Prostate gland (tissue), 2 donors: ENCODE measurements at regions of chr21 and their contacts with region 1.

Region 1: GRCh38 chr21:45554477-45555175 is 12.4 kb upstream of the SLC19A1 start:
- DNase-seq: peak; percentile 73
- H3K4me3 ChIP-seq: peak overlapping the region; percentile 38 to 44
- H3K27ac ChIP-seq: peak overlapping the region; percentile 61 to 85
- H3K4me1 ChIP-seq: no peaks in the 10 kb centered on the region
- H3K27me3 ChIP-seq: no peaks in the 10 kb centered on the region
- CTCF ChIP-seq: peak; percentile 82 to 96 (median 92)
- POLR2A ChIP-seq: peak; percentile 22

Region 2: GRCh38 chr21:45393021-45393420 is 161.6 kb before region 1 on chr21:
- intact Hi-C with region 1: no loop called
- DNase-seq: no peak
- H3K4me3 ChIP-seq: no peak overlapping the region
- H3K27ac ChIP-seq: no peak overlapping the region
- H3K4me1 ChIP-seq: no peaks in the 10 kb centered on the region
- H3K27me3 ChIP-seq: no peaks in the 10 kb centered on the region
- CTCF ChIP-seq: no peak
- POLR2A ChIP-seq: no peak

Region 3: GRCh38 chr21:45598109-45598508 is 43.5 kb after region 1 on chr21:
- intact Hi-C with region 1: loop called (anchors 2 kb)
- DNase-seq: no peak
- H3K4me3 ChIP-seq: no peak overlapping the region
- H3K27ac ChIP-seq: no peak overlapping the region
- H3K4me1 ChIP-seq: no peaks in the 10 kb centered on the region
- H3K27me3 ChIP-seq: no peaks in the 10 kb centered on the region
- CTCF ChIP-seq: no peak
- POLR2A ChIP-seq: no peak

Region 4: DNA sequence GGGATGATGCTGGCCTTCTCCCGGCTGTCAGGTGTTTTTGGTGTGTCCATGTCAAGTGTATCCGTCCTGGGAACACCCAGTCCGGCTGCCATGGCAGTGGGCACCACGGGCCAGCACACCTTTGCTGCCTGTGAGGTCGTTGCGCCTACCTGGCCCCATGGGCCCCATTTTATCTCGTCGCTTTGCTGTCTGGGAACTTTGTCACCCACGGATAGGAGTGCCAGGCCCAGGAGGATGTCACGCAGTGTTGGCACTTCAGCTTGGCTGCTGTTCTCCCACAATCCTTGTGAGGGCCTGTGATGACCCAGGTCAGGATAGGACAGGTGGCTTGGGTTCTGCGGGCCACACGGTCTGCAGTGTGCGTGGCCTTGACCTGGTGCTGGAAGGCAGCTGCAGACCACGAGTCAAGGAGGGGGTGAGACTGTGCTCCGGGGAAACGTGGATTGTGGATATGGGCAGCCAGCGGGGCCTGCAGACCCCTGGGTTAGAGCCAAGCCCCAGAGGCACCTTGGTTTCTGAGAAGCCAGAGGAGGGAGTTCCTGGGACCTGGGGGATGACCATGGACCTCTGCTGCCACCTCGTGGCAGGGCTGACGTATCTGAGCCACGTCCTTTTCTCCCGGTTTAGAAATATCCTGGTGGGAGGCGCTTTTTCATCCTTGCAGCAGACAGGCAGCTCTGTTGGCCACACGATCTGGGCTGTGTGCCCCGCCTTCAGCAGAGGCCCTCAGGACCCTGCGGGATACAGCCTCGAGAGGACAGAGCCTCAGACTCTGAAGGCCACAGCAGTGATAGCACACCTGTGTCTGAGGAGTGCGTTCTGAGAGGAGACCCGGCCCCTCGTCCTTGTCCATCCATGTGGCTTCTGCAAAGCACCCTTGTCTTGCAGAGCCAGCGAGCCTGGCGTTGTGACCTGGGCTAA is 265.8 kb after region 1 on chr21:
- intact Hi-C with region 1: loop called (anchors 5 kb)
- DNase-seq: peak; percentile 70
- H3K4me3 ChIP-seq: no peak overlapping the region
- H3K27ac ChIP-seq: no peak overlapping the region
- H3K4me1 ChIP-seq: no peaks in the 10 kb centered on the region
- H3K27me3 ChIP-seq: peaks cover 3% of the 10 kb centered on the region
- CTCF ChIP-seq: peak; percentile 65 to 94 (median 86)
- POLR2A ChIP-seq: no peak

Region 5: GRCh38 chr21:45923146-45923545 is 368.5 kb after region 1 on chr21:
- intact Hi-C with region 1: loop called (anchors 10 kb)
- DNase-seq: peak; percentile 52
- H3K4me3 ChIP-seq: no peak overlapping the region
- H3K27ac ChIP-seq: no peak overlapping the region
- H3K4me1 ChIP-seq: no peaks in the 10 kb centered on the region
- H3K27me3 ChIP-seq: no peaks in the 10 kb centered on the region
- CTCF ChIP-seq: peak; percentile 64 to 84 (median 71)
- POLR2A ChIP-seq: no peak